ENCODE measurements at regions of chr12 and their contacts with region 1.

Region 1: GRCh38 chr12:6207259-6207925 is 7.2 kb downstream of the CD9 start:
- DNase-seq: no peak

Region 2: DNA sequence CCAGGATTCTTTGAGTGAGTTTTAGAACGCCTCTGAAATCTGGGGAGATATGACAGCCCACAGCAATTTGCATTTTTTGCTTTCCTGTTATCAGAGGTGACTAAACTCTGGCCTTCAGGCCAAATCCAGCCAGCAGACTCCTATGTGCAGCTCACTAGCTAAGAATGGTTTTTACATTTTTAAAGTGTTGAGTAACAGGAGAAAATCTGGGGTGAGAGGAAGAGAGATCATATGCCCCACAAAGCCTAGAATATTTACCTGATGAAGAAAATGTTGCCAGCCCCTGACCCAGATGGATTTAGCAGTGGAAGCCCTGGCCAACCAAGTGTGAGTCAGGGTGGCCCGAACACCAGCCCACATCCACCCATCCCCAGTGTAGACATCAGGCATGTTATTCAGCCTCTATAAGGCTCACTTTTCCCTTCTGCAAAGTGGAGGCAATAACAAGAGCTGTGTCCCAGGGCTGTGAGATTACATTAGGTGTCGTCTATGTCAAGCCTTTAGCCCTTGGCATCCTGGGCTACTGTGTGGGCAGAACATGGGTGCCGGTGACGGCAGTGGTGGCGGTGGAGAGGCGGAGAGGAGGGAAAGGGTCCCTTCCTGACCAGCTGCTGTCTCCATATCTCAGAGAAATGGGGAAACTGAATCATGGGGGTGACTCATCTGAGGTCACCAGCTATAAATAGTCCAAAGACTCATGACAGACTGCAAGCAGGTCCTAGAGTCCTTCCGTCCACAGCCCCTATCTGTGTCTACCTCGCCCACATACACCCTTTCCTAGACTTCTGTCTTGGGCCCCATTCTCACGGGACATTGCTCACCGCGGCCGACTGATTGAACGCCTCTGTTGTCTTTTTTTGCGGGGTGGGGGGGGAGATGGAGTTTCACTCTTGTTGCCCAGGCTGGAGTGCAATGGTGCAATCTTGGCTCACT is 39.8 kb before region 1 on chr12:
- intact Hi-C with region 1: no loop called
- DNase-seq: peak; percentile 86

Region 3: DNA sequence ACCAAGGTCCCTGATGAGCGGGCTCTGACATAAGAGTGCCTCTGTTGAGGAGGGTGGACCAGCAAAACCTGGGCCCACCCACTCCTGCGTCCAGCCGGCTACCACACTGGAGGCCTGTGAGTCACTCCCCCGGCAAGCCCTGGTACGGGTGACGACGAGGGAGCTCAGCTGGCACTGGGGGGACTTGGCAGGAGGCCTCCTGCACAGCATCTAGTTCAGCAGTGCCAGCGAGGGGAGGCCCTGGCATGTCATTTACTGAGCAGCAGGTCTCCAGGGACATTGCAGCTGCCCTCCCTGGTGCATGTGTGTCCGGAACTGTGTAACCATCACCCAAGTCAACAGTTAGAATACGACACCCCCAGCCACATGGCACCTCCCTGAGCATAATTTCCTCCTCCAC is 17.2 kb after region 1 on chr12:
- intact Hi-C with region 1: loop called (anchors 2 kb)
- DNase-seq: no peak

Region 4: DNA sequence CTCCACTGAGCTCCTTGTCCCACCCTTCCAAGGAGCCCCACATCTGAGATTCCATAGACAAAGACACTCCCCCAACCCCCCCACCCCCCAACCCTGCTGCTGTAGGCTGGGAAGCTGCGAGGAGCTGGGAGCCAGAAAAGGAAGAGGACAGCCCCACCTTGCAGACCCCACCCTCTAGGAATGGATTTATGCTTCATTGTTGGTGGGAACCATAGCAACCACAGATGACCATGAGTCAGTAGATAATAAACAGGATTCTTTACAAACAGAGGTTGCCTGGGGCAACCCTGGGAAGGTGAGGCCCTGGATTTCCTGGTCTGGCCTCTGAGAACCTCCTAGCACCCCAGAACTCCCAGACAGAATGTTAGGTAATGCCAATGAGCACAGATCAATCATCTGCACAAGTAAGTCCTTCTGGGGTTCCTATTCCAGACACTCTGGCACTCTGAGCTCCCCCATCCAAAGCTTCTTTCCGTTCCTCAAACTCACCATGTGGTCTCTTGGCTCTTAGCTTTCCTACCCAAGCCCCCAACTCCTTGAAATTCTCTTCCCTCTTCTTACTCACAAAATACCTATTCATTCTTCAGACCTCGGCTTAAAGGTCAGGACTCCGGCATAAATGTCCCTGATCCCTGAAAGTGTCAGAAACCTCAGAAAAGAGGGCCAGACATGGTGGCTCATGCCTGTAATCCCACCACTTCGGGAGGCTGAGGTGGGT is 87.9 kb after region 1 on chr12:
- intact Hi-C with region 1: no loop called
- DNase-seq: no peak

Region 5: GRCh38 chr12:6890789-6891645 is 683.6 kb after region 1 on chr12:
- intact Hi-C with region 1: no loop called
- DNase-seq: peak; percentile 99